ENCODE measurements at regions of chr21 and their contacts with region 1.

Region 1: DNA sequence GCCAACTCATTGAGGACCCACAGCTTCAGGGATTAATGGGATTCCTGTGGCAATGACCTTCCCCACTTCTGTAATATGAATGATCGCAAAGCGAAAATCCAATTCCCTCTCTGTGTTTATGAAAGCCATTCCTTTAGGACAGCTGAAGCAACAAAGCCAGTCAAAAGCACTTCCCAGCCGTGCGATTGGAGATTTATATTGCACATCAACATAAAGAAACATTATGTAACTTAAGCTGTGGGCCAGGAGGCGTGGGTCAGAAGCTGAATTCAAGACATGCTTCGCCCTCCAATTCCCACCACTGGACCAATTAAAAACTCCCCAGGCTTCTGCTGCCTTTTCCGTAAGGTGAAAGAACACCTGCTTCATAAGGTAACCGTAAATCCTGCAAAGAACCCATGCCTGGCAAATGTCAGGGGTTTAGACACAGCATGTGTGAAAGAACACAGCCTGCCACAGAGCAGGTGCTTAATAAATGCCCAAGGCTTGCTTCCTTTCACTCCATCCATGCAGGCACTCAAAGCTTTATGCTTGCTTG is 138.9 kb upstream of the SOD1 start:
- H3K4me3 ChIP-seq: no peak overlapping the region
- H3K27ac ChIP-seq: peak overlapping the region; percentile 29; the same call in 1 of the 2 replicates
- H3K4me1 ChIP-seq: peaks cover 21% of the 10 kb centered on the region
- CTCF ChIP-seq: no peak

Region 2: DNA sequence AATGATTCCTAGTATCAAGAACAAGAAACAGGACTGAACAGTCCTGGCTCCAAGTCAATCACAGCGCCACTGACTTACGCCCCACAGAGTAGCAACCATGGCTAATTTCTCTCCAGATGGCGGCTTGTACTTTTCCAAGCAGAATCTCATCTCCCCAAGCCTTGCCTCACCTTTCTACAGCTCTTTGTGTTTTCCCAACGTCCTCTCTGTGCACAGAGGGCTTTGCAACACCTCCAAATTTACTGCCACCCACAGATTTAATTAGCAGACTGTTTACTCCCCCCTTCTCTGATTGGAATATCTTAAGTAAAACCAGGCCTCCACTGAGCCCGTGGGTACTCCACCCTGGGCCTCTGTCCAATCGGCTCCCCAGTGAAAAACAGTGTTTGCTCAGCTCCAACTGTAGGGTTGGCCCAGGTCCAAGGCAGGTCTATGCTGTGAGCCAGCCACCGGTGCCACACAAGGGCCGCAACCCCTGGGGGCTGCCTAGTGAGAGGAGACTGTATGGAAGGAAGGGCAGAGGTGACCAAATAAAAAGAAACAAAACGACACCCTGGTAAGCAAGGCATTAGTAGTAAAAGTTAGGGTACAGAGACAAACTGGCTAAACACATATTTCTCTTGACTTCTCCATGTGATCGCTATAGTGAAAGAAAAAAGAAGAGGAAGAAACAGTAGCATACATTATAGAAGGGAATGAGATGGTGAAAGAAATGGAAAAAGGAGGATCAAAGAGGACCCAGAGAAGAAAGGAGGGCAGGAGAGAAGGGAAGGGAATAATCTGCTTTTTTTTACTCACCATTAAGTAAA is 10.5 kb after region 1 on chr21:
- CTCF ChIA-PET with region 1: no interaction called
- POLR2A ChIA-PET with region 1: interaction called, 11 read pairs
- H3K4me3 ChIP-seq: no peak overlapping the region
- H3K27ac ChIP-seq: peak overlapping the region; percentile 68
- H3K4me1 ChIP-seq: peaks cover 32% of the 10 kb centered on the region
- CTCF ChIP-seq: no peak